ENCODE measurements at regions of chr21 and their contacts with region 1.

Region 1: DNA sequence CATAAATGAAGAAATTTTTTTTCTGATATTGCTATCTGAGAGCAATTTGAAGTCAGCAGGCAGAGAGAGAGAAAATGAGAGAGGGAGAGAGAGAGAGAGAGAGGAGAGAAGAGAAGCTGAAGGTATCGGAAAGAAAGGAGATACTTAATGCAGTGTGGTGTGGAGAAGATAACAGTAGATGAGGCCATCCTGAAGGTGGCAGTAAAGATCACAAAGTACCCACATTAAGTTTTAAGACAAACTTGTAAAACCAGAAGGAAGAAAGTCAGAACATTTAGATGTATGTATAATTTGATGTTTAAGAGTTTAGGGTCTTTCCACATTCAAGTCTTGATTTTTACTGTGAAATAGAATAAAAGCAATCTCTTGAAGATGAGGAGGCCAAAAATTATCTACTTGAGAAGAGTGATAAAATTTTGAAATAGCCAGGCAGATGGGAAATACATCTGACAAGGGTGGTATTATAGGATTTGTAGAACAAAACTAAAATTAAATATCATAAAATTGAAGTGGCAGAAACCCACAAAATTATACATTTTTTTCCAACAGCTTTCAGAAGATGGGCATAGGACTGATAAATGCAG is 1753.4 kb downstream of the MRPL39 start:
- DNase-seq: peak in 6 of 9 donors; percentile 18 to 56 (median 34)
- ATAC-seq: peak; percentile 75
- H3K4me3 ChIP-seq: no peak overlapping the region
- H3K4me3 Mint-ChIP-seq: no peak overlapping the region
- H3K27ac ChIP-seq: no peak overlapping the region
- H3K27ac Mint-ChIP-seq: peak overlapping the region in 1 of 9 donors; percentile 6
- H3K4me1 ChIP-seq: no peaks in the 10 kb centered on the region
- H3K4me1 Mint-ChIP-seq: peaks cover 4 to 11% (median 6%) of the 10 kb centered on the region in 7 donors
- H3K27me3 ChIP-seq: no peaks in the 10 kb centered on the region
- H3K27me3 Mint-ChIP-seq: peaks cover 0 to 8% (median 0%) of the 10 kb centered on the region in 5 donors

Region 2: GRCh38 chr21:24045775-24046215 is 191.9 kb after region 1 on chr21:
- CTCF ChIA-PET with region 1: no interaction called
- POLR2A ChIA-PET with region 1: no interaction called
- intact Hi-C with region 1: loop called in 1 of 2 experiments (anchors 5 kb)
- DNase-seq: peak in 1 of 9 donors; percentile 4
- ATAC-seq: no peak
- H3K4me3 ChIP-seq: no peak overlapping the region
- H3K4me3 Mint-ChIP-seq: peak overlapping the region in 7 of 10 donors; percentile 26 to 53 (median 41)
- H3K27ac ChIP-seq: no peak overlapping the region
- H3K27ac Mint-ChIP-seq: peak overlapping the region in 3 of 9 donors; percentile 70 to 81 (median 74)
- H3K4me1 ChIP-seq: peaks cover 0 to 11% of the 10 kb centered on the region in 2 donors
- H3K4me1 Mint-ChIP-seq: peaks cover 0 to 36% (median 19%) of the 10 kb centered on the region in 7 donors
- H3K27me3 ChIP-seq: no peaks in the 10 kb centered on the region
- H3K27me3 Mint-ChIP-seq: no peaks in the 10 kb centered on the region

Region 3: GRCh38 chr21:24076179-24076578 is 222.3 kb after region 1 on chr21:
- CTCF ChIA-PET with region 1: no interaction called
- POLR2A ChIA-PET with region 1: no interaction called
- intact Hi-C with region 1: loop called in 1 of 2 experiments (anchors 1 kb)
- DNase-seq: peak in 2 of 9 donors; percentile 10 to 11
- ATAC-seq: no peak
- H3K4me3 ChIP-seq: no peak overlapping the region
- H3K4me3 Mint-ChIP-seq: no peak overlapping the region
- H3K27ac ChIP-seq: no peak overlapping the region
- H3K27ac Mint-ChIP-seq: no peak overlapping the region
- H3K4me1 ChIP-seq: no peaks in the 10 kb centered on the region
- H3K4me1 Mint-ChIP-seq: no peaks in the 10 kb centered on the region
- H3K27me3 ChIP-seq: no peaks in the 10 kb centered on the region
- H3K27me3 Mint-ChIP-seq: no peaks in the 10 kb centered on the region